ENCODE measurements at regions of chr15 and their contacts with region 1.

Region 1: GRCh38 chr15:40118473-40118872 is 9.8 kb upstream of the BMF start:
- DNase-seq: no peak
- H3K4me3 ChIP-seq: no peak overlapping the region
- H3K27ac ChIP-seq: no peak overlapping the region
- H3K4me1 ChIP-seq: no peaks in the 10 kb centered on the region
- H3K27me3 ChIP-seq: no peaks in the 10 kb centered on the region
- CTCF ChIP-seq: no peak
- EP300 ChIP-seq: no peak
- POLR2A ChIP-seq: no peak

Region 2: DNA sequence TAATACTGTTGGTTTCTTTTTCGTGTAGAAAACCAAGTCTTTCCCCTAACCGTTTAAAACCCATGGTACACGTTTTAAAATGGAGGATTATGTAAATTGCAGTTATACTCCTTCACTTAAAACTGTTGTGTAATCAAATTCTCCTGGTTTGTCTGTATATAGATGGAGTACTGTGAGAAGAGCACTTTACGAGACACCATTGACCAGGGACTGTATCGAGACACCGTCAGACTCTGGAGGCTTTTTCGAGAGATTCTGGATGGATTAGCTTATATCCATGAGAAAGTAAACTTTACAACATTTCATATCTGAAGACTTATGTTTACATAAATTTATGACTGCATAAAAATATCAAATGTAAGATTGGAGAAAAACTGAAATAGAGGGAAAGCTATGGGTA is 130.7 kb before region 1 on chr15:
- intact Hi-C with region 1: loop called in 1 of 4 experiments (anchors 2 kb)
- DNase-seq: no peak
- H3K4me3 ChIP-seq: no peak overlapping the region
- H3K27ac ChIP-seq: no peak overlapping the region
- H3K4me1 ChIP-seq: no peaks in the 10 kb centered on the region
- H3K27me3 ChIP-seq: no peaks in the 10 kb centered on the region
- CTCF ChIP-seq: no peak
- EP300 ChIP-seq: no peak
- POLR2A ChIP-seq: no peak

Region 3: DNA sequence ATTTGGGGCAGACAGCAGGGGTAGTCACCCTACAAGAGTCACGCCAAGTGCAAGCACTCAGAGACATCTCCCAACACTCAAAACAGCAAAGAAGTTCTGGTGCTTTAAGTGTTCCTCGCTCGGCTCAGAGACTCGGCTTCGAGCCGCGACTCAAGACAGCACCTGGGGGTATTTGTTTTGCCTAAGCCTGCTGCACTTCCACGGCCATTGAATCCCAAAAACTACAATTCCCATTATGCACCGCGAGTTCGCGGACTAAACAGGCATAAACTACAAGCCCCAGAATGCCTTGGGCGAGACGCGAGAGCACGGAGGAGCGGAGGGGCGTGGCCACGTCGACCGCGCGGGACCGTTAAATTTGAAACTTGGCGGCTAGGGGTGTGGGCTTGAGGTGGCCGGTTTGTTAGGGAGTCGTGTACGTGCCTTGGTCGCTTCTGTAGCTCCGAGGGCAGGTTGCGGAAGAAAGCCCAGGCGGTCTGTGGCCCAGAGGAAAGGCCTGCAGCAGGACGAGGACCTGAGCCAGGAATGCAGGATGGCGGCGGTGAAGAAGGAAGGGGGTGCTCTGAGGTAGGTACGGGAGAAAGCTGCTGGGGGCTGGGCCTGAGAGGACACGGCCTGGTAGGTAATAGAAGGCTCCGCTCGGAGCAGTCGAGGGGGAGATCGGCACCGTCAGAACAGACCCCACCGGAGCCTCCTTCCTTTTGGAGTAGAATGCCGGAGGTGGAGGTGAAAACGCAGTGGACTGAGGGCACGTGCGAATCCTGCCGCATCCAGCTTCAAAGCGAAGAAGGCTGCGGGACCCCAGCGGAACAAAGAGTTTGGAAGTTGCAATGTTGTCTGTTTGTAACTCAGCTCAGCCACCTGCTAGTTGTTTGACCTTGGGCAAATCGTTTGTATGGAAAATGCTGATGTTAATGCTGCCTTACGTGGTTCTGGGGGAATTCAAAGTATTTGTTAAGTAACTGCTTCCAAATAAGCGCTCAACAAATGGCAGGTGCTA is 42.5 kb after region 1 on chr15 and contains the start of gene BUB1B:
- intact Hi-C with region 1: loop called in 1 of 4 experiments (anchors 5 kb)
- DNase-seq: peak; percentile 88 to 93 (median 92)
- H3K4me3 ChIP-seq: peak within 1 kb of the TSS; percentile 40
- H3K27ac ChIP-seq: no peak within 1 kb of the TSS
- H3K4me1 ChIP-seq: peaks cover 5% of the 10 kb centered on the region
- H3K27me3 ChIP-seq: no peaks in the 10 kb centered on the region
- CTCF ChIP-seq: no peak
- EP300 ChIP-seq: no peak
- POLR2A ChIP-seq: no peak
- total RNA-seq, gene BUB1B: 0.43 to 2.4 (median 1.1) TPM in 6 of 7 donors, not detected in the other